Dendritic cell treated with granulocyte-macrophage colony-stimulating factor and Interleukin-4, amounts not matched to agents 40 ng/mL and 50 ng/mL, for 4 days (primary cell): ENCODE measurements at regions of chr7 and their contacts with region 1.

Region 1: DNA sequence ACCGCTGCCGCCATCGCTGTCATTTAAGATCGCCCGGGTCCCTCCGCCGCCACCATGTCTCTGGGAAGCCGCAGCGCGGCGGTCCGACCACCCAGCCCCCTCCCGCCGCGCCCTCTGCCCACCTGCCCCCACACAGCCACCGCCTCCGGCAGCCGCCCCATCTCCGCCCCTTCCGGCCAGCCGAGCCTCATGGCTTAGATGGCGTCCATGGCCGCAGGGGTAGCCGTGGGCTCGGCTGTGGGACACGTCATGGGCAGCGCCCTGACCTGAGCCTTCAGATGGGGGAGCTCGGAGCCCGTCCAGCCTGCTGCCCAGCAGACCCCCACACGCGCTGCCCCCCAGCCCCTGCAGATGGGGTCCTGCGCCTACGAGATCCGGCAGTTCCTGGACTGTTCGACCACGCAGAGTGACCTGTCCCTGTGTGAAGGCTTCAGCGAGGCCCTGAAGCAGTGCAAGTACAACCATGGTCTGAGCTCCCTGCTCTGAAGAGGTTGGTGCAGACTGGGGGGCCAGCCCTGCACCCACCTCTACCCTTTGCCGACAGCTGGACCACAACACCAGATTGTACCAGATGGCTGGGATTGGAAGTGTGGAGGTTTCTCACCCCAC is 38.0 kb upstream of the TARP start:
- H3K4me3 Mint-ChIP-seq: peak overlapping the region; percentile 74
- H3K27ac Mint-ChIP-seq: peak overlapping the region; percentile 81
- H3K4me1 Mint-ChIP-seq: peaks cover 43% of the 10 kb centered on the region
- H3K27me3 Mint-ChIP-seq: no peaks in the 10 kb centered on the region

Region 2: DNA sequence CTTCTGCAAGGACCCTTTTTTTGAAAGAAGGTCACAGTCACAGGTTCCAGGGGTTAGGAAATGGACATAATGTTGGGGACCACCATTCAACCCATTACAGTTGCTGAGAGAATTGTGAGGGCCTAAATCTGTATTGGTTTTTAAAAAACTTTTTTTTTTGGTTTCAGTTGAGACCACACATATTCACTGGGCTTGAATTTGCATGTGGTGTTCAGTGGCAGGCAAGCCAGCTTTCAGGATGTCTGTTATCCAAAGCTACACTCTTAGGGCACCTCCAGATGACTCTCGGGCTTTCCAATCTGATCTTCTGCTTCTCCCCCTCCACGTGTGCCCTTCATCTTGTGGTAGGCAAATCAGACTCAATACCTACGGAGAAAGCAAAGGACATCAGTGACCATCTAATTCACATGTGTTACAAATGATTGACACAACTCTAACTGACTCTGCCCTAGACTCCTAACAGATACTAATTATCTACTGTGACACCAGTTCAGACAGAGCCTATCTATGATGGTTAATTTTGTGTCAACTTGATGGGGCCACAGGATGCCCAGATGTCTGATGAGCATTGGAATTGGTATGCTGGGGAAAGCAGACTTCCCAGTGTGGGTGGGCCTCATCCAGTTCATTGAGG is 769.5 kb before region 1 on chr7:
- intact Hi-C with region 1: no loop called
- H3K4me3 Mint-ChIP-seq: no peak overlapping the region
- H3K27ac Mint-ChIP-seq: no peak overlapping the region
- H3K4me1 Mint-ChIP-seq: no peaks in the 10 kb centered on the region
- H3K27me3 Mint-ChIP-seq: peaks cover 3% of the 10 kb centered on the region

Region 3: DNA sequence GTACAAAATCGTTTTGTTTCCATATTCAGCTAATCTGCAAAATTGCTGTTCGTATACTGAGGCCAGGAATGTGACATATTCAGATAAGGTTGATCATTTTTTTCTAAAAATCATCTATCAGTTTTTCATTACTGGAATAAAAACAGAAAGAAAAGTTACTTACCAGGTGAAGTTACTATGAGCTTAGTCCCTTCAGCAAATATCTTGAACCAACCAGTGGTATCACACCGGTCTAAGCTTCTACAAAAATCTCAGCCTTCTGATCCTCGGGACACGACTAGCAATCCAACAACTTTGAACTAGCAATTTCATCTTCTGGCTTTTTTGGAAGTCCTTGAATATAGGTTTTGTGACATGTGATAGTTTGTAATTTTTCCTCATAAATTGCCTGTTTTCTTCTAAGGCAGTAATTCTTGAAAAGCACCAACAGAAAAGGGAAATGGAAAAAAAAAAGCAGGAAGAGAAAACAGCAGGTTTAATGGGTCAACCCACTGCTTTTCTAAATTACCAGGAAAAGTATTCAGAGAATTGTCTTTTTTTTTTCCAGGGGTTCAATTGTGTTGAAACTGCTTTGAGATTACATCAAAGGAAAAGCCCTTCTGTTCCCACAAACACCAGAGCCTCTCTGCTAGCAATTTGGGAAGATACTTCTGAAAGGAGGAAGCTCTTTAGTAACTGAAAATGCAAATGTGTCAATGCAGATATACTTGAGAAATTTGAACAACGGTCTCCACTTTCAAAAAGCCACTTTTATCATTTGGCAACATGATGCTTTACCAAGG is 35.1 kb before region 1 on chr7:
- intact Hi-C with region 1: loop called (anchors 5 kb)
- H3K4me3 Mint-ChIP-seq: peak overlapping the region; percentile 9
- H3K27ac Mint-ChIP-seq: peak overlapping the region; percentile 60
- H3K4me1 Mint-ChIP-seq: peaks cover 22% of the 10 kb centered on the region
- H3K27me3 Mint-ChIP-seq: peaks cover 7% of the 10 kb centered on the region